Activated CD8-positive, alpha-beta T cell treated with anti-CD3 and anti-CD28 coated beads, Interleukin-2, amount 10 ng/mL, durations not matched to agents 7 days and 5 days (primary cell): ENCODE measurements at regions of chr19 and their contacts with region 1.

Region 1: DNA sequence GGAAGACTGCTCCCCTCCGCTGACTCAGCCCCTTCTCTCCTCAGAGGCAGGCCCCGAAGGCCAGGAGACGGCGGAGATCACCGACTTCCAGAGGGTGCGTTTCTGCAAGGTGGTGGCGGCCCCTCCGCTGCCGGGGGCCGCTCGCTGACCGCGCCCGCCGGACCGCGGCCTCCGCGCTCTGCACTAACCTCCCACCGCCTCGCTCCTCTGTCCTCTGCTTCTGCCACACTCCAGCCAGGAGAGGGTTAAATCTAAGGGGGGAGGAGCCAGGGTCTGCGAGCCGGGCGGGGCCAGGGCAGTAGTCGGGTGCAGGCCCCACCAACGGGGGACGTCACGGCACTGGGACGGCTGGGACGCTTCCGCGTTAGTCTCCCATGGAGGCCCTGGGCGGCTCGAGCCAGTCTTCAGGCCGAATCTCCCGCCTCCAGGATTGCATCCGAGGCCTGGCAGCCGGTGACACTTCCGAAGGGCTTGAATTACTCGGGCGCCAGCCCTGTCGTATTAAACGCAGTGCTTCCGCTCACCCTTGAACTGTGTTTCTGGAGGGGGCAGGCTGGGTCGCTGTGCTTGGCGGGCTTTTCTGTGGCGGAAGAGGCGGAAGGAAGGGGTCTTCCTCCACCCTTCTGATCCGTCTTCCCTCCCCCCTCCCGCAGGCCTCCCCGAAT is 1.2 kb upstream of the INAFM1 start:
- DNase-seq: peak; percentile 94
- ATAC-seq: peak; percentile 80
- H3K4me3 Mint-ChIP-seq: peak overlapping the region; percentile 93
- H3K27ac Mint-ChIP-seq: peak overlapping the region; percentile 98
- H3K4me1 Mint-ChIP-seq: peaks cover 27% of the 10 kb centered on the region
- H3K27me3 Mint-ChIP-seq: no peaks in the 10 kb centered on the region

Region 2: DNA sequence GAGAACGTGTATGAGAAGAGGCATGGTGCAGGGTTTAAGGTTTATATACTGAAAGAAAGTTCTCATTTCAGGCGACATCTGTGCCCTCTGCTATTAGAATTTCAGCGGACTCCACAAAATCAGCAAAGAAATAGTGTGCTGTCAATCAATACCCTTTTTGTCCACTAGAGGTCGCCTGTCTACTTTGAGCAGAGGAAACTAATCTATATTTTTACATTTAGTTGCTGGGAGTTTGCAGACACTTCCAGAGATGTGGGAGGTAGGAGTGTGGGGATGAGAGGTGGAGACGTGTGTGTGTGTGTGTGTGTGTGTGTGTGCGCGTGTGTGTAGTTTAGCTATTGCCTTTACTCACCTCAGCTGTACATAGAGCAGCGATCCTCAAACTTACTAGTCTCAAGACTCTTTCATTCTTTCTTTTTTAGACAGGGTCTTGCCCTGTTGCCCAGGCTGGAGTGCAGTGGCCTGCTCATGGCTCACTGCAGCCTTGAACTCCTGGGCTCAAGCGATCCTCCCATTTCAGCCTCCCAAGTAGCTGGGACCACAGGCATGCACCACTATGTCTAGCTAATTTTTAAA is 11.0 kb after region 1 on chr19:
- CTCF ChIA-PET with region 1: interaction called, 32 read pairs
- POLR2A ChIA-PET with region 1: no interaction called
- DNase-seq: peak; percentile 68
- ATAC-seq: peak; percentile 43
- H3K4me3 Mint-ChIP-seq: no peak overlapping the region
- H3K27ac Mint-ChIP-seq: no peak overlapping the region
- H3K4me1 Mint-ChIP-seq: peaks cover 7% of the 10 kb centered on the region
- H3K27me3 Mint-ChIP-seq: no peaks in the 10 kb centered on the region